ENCODE measurements at regions of chr20 and their contacts with region 1.

Region 1: GRCh38 chr20:58215116-58215515 is 13.3 kb downstream of the ANKRD60 start:
- DNase-seq: no peak
- ATAC-seq: no peak
- H3K4me3 ChIP-seq: no peak overlapping the region
- H3K4me3 Mint-ChIP-seq: no peak overlapping the region
- H3K27ac ChIP-seq: no peak overlapping the region
- H3K27ac Mint-ChIP-seq: no peak overlapping the region
- H3K4me1 ChIP-seq: peaks cover 0 to 1% of the 10 kb centered on the region in 2 experiments
- H3K4me1 Mint-ChIP-seq: no peaks in the 10 kb centered on the region
- H3K27me3 ChIP-seq: peaks cover 4 to 39% of the 10 kb centered on the region in 2 experiments
- H3K27me3 Mint-ChIP-seq: peaks cover 35 to 40% of the 10 kb centered on the region in 2 donors

Region 2: GRCh38 chr20:58160451-58161061 is 54.6 kb before region 1 on chr20:
- CTCF ChIA-PET with region 1: interaction called in 1 of 2 experiments, 10 read pairs
- POLR2A ChIA-PET with region 1: no interaction called
- DNase-seq: no peak
- ATAC-seq: no peak
- H3K4me3 ChIP-seq: no peak overlapping the region
- H3K4me3 Mint-ChIP-seq: no peak overlapping the region
- H3K27ac ChIP-seq: no peak overlapping the region
- H3K27ac Mint-ChIP-seq: no peak overlapping the region
- H3K4me1 ChIP-seq: no peaks in the 10 kb centered on the region
- H3K4me1 Mint-ChIP-seq: no peaks in the 10 kb centered on the region
- H3K27me3 ChIP-seq: peaks cover 0 to 8% of the 10 kb centered on the region in 2 experiments
- H3K27me3 Mint-ChIP-seq: peaks cover 3 to 5% of the 10 kb centered on the region in 2 donors

Measured in T-cell (primary cell).